ENCODE measurements at regions of chr19 and their contacts with region 1.

Region 1: GRCh38 chr19:39941615-39942365 is 7.4 kb upstream of the FCGBP start:
- DNase-seq: peak; percentile 88 to 97 (median 96)
- H3K4me3 ChIP-seq: peak overlapping the region in 1 of 7 experiments; percentile 19
- H3K27ac ChIP-seq: no peak overlapping the region
- H3K4me1 ChIP-seq: peaks cover 15 to 21% (median 17%) of the 10 kb centered on the region in 4 experiments
- H3K27me3 ChIP-seq: peaks cover 0 to 76% (median 34%) of the 10 kb centered on the region in 5 experiments

Region 2: GRCh38 chr19:39889872-39890545 is 51.8 kb before region 1 on chr19:
- CTCF ChIA-PET with region 1: no interaction called
- POLR2A ChIA-PET with region 1: no interaction called
- DNase-seq: no peak
- H3K4me3 ChIP-seq: no peak overlapping the region
- H3K27ac ChIP-seq: no peak overlapping the region
- H3K4me1 ChIP-seq: no peaks in the 10 kb centered on the region
- H3K27me3 ChIP-seq: peaks cover 0 to 38% (median 2%) of the 10 kb centered on the region in 5 experiments

Region 3: DNA sequence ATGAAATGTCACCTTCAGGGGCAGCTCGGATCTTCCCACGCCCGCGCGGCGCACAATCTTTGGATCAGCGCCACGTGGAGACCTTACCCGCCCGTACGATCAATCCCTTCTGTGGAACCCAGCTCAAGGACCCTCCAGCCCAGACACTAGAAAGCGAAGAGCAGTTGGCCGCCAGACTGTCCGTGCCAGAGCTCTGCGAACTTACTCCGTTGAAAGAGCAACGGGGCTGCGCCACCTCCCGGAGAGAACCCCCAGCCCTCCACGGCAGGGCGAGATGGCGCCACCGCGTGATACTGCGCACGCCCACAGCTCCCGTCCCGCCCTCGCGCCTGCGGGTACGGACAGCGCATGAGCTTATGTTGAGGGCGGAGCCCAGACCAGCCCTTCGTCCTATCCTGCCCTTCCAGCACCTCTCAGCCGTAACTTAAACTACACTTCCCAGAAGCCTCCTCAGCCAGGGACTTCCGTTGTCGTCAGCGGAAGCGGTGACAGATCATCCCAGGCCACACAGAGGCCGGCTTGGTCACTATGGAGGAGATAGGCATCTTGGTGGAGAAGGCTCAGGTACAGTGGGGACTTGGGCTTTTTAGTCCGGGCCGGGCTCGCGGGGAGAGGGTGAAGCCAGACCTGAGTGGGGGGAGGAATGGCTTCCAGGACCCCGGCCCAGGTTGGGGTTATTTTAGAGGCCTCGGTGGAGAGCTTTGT is 29.0 kb after region 1 on chr19 and contains the start of gene PSMC4:
- CTCF ChIA-PET with region 1: interaction called, 13 read pairs
- POLR2A ChIA-PET with region 1: no interaction called
- DNase-seq: peak; percentile 99
- H3K4me3 ChIP-seq: peak within 1 kb of the TSS; percentile 64 to 98 (median 84)
- H3K27ac ChIP-seq: peak within 1 kb of the TSS; percentile 95 to 99
- H3K4me1 ChIP-seq: peaks cover 4 to 19% (median 17%) of the 10 kb centered on the region in 4 experiments
- H3K27me3 ChIP-seq: peaks cover 0 to 38% (median 6%) of the 10 kb centered on the region in 5 experiments

Region 4: GRCh38 chr19:40055832-40056504 is 114.2 kb after region 1 on chr19 and contains the start of gene ZNF780B:
- CTCF ChIA-PET with region 1: no interaction called
- POLR2A ChIA-PET with region 1: no interaction called
- DNase-seq: peak; percentile 64 to 86 (median 80)
- H3K4me3 ChIP-seq: peak within 1 kb of the TSS; percentile 73 to 95 (median 91)
- H3K27ac ChIP-seq: peak within 1 kb of the TSS; percentile 14 to 67
- H3K4me1 ChIP-seq: peaks cover 4 to 20% (median 10%) of the 10 kb centered on the region in 4 experiments
- H3K27me3 ChIP-seq: no peaks in the 10 kb centered on the region

Measured in common myeloid progenitor, CD34-positive (primary cell).